KBM-7 (cell line): ENCODE measurements at regions of chr9 and their contacts with region 1.

Region 1: DNA sequence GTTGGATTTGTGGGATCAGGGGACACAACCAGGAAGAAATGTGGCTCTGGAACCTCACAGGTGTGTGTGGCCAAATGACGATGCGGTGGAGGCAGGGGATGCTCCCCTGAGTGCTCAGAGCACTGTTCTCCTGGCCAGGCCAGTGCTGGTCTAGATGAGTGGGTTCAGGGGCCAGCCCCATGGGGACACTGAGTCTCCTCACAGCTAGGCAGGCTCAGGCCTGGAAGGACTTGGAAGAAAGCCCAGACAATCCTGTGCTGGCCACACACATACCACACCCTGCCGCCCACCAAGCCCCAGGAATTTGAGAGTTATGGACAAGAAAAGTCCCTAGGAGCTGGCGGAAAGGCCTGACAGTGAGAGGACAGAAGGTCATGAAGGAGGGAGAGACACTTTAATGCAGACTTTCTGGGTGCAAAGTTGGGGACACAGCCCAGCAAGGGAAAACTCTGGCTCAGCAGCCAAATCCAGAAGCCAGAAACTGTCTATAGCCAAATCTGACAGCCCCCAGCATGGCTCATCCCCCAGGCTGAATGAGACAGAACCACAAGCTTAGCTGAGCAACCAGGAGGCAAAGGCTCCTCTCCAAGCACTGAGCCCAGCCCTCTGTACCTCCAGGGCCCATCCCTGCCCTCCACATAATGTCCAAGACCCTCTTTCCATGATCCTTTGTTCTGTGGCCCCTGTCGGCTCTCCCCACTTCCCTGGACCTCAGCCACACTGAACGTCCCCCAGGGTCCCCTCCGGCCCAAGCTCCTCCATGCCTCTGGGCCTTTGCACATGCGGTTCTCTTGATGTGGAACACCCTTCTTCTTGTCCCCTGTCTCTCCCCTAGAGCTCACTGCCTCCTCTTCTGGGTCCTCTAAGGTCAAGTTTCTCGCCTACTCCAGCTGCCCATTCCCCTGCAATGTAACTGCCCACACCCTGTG is 22.4 kb downstream of the LHX6 start:
- DNase-seq: no peak

Region 2: GRCh38 chr9:121912812-121913627 is 293.4 kb before region 1 on chr9:
- in situ Hi-C with region 1: no loop called
- DNase-seq: peak; percentile 68

Region 3: GRCh38 chr9:122172131-122172530 is 34.3 kb before region 1 on chr9:
- in situ Hi-C with region 1: loop called (anchors 5 kb)
- DNase-seq: no peak